B cell (primary cell): ENCODE measurements at regions of chr7 and their contacts with region 1.

Region 1: DNA sequence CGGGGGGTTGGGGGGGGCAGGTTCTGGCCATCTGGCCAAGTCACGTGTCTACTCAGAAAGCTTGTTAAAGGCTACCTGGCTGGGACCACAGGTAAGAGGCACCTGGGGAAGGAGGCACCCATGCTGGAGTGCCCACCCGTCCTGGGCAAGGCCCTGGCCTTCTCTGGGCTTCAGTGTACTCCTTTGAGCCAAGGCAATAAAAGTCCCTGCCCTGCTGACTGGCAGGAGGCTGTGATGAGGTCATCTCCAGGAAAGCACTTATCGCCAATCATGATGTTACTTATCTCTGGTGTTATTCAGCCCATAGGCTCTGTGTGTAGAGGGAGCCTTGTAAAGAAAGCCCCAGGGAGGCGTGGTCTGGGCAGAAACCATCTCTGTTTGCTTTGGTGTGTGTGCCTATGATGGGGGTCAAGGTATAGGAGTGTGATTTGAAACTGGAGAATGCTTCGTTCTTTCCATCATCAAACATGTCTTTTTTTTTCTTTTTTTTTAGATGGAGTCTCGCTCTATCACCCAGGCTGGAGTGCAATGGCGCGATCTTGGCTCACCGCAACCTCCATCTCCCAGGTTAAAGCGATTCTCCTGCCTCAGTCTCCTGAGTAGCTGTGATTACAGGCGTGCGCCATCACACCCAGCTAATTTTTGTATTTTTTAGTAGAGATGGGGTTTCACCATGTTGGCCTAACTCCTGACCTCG is 2.5 kb upstream of the CLDN4 start:
- DNase-seq: no peak
- ATAC-seq: no peak
- H3K4me3 ChIP-seq: no peak overlapping the region
- H3K4me3 Mint-ChIP-seq: peak overlapping the region; percentile 32
- H3K27ac ChIP-seq: no peak overlapping the region
- H3K27ac Mint-ChIP-seq: no peak overlapping the region
- H3K4me1 ChIP-seq: peaks cover 23 to 24% of the 10 kb centered on the region in 2 donors
- H3K4me1 Mint-ChIP-seq: peaks cover 30% of the 10 kb centered on the region
- H3K27me3 ChIP-seq: peaks cover 0 to 5% (median 0%) of the 10 kb centered on the region in 4 experiments
- H3K27me3 Mint-ChIP-seq: no peaks in the 10 kb centered on the region
- CTCF ChIP-seq: no peak

Region 2: DNA sequence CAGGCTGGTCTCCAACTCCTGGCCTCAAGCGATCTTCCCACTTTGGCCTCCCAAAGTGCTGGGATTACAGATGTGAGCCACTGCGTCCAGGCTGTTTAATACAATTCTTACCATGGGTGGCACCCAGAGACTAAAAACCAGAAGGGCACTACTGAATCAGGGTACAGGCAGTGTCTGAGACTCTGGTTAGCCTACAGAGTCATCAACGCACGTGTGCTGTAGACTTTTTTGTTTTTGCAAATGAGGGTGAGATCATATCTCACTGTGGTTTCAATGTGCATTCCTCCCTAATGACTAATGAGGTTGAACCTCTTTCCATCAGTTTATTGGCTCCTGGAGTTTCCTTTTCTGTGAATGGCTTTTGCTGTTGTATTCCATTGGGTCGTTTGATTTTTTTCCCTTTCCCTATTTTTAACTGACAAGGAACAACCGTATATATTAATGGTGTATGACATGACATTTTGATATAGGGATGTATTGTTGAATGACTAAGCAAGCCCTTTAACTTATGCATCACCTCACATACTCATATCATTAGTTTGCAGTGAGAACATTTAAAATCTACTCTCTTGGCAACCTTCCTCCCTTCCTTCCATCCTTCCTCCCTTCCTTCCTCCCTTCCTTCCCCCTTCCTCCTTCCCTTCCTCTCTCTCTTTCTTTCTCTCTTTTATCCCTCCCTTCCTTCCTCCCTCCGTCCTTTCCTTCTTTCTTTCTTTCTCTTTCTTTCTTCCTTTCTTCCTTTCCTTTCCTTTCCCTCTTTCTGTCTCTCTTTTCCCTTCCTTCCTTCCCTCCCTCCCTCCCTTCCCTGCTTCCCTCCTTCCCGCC is 23.4 kb after region 1 on chr7:
- CTCF ChIA-PET with region 1: interaction called, 31 read pairs
- POLR2A ChIA-PET with region 1: no interaction called
- intact Hi-C with region 1: loop called (anchors 1 kb)
- DNase-seq: no peak
- ATAC-seq: peak; percentile 41
- H3K4me3 ChIP-seq: no peak overlapping the region
- H3K4me3 Mint-ChIP-seq: no peak overlapping the region
- H3K27ac ChIP-seq: no peak overlapping the region
- H3K27ac Mint-ChIP-seq: no peak overlapping the region
- H3K4me1 ChIP-seq: peaks cover 3 to 10% of the 10 kb centered on the region in 2 donors
- H3K4me1 Mint-ChIP-seq: peaks cover 13% of the 10 kb centered on the region
- H3K27me3 ChIP-seq: peaks cover 0 to 16% (median 3%) of the 10 kb centered on the region in 4 experiments
- H3K27me3 Mint-ChIP-seq: peaks cover 29% of the 10 kb centered on the region
- CTCF ChIP-seq: no peak

Region 3: DNA sequence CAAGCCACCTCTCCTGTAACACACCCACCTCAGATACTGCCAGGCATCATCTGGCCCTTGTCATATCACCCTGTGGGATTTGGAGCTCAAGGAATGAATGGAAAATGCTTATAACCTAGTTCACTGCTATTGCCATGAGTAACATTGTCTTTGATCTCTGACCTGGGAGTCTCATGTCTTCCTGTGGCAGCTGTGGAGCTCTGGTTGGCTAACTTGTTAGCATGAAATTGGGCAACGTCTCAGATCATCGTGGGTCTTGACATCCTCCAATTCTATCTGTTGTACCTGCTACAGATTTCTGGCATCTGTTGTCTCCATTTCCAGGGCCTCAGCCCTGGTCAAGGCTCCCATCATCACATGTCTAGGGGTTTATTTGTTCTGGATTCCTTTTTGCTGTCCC is 30.6 kb after region 1 on chr7:
- CTCF ChIA-PET with region 1: interaction called, 31 read pairs
- POLR2A ChIA-PET with region 1: no interaction called
- intact Hi-C with region 1: loop called (anchors 1 kb)
- DNase-seq: no peak
- ATAC-seq: no peak
- H3K4me3 ChIP-seq: no peak overlapping the region
- H3K4me3 Mint-ChIP-seq: no peak overlapping the region
- H3K27ac ChIP-seq: no peak overlapping the region
- H3K27ac Mint-ChIP-seq: no peak overlapping the region
- H3K4me1 ChIP-seq: peaks cover 3 to 8% of the 10 kb centered on the region in 2 donors
- H3K4me1 Mint-ChIP-seq: peaks cover 6% of the 10 kb centered on the region
- H3K27me3 ChIP-seq: peaks cover 0 to 12% (median 2%) of the 10 kb centered on the region in 4 experiments
- H3K27me3 Mint-ChIP-seq: peaks cover 21% of the 10 kb centered on the region
- CTCF ChIP-seq: no peak

Region 4: GRCh38 chr7:74026903-74027551 is 198.8 kb after region 1 on chr7:
- CTCF ChIA-PET with region 1: interaction called, 15 read pairs
- POLR2A ChIA-PET with region 1: interaction called, 5 read pairs
- intact Hi-C with region 1: no loop called
- DNase-seq: peak; percentile 69
- ATAC-seq: peak; percentile 78
- H3K4me3 ChIP-seq: no peak overlapping the region
- H3K4me3 Mint-ChIP-seq: no peak overlapping the region
- H3K27ac ChIP-seq: no peak overlapping the region
- H3K27ac Mint-ChIP-seq: no peak overlapping the region
- H3K4me1 ChIP-seq: peaks cover 11 to 13% of the 10 kb centered on the region in 2 donors
- H3K4me1 Mint-ChIP-seq: peaks cover 7% of the 10 kb centered on the region
- H3K27me3 ChIP-seq: peaks cover 0 to 62% (median 23%) of the 10 kb centered on the region in 4 experiments
- H3K27me3 Mint-ChIP-seq: peaks cover 53% of the 10 kb centered on the region
- CTCF ChIP-seq: peak; percentile 93